Heart left ventricle (tissue), 16 donors: ENCODE measurements at regions of chr11 and their contacts with region 1.

Region 1: DNA sequence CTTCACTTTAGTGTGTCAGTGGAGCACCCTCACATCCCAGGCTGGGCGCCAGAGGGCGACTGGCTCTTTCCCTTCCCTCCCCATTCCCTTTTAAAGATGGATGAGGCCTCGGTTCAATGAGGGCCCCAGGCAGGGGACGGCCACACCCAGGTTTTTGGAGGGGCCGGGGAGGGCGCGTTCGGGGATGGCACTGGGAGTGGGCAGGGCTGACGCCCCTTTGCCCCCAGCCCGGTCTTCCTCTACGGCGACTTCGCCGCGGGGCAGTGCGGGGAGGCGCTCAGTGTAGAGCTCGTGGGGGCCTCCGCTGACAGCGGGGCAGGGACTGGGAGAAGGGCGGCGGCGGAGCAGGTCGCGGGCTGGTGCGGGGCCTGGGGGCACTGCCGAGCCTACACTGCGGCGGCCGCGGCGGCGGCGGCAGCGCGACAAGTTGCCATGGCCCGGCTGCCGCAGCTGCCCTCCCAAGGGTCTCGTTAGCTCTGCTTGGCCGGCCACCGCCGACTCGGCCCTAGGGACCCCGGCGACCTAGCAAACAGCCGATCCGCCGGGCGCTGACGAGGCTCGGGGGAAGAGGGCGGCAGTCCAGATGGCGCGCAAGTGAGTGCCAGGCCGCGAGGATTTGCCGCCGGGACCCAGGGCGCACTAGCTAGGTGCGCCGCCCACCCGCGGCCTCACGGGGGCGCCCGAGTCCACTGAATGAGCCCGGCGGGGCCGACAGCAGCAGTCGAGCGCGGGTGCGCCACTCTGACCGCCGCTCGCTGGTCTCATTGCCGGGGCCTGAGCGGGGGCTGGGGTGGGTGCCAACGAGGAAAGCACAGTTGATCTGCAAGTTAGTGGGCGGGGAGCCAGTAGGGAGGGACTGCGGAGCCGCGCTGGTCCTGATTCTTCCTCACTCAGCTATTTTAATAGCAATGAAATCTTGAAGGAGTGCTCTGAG is 92.7 kb downstream of the RRM1 start:
- DNase-seq: peak; percentile 89 to 96 (median 95)
- ATAC-seq: peak; percentile 53 to 90 (median 82)
- H3K4me3 ChIP-seq: peak overlapping the region; percentile 48 to 75 (median 64)
- H3K27ac ChIP-seq: peak overlapping the region in 6 of 12 donors; percentile 7 to 78 (median 68)
- H3K4me1 ChIP-seq: peaks cover 0 to 35% (median 7%) of the 10 kb centered on the region in 12 donors
- H3K27me3 ChIP-seq: no peaks in the 10 kb centered on the region
- CTCF ChIP-seq: peak; percentile 91 to 98 (median 95)
- POLR2A ChIP-seq: no peak

Region 2: DNA sequence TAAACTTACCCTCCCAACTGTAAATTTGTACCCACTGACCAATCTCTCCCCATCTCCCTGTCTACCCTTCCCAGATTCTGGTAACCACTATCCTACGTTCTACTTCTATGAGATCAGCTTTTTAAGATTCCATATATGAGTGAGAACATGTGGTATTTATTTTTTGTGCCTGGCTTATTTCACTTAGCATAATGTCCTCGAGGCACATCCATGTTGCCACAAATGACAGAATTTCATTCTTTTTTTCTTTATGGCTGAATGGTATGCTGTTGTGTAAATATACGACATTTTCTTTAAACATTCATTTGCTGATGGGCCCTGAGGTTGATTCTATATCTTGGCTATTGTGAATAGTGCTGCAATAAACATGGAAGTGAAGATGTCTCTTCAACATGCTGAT is 167.4 kb before region 1 on chr11:
- intact Hi-C with region 1: no loop called
- DNase-seq: no peak
- ATAC-seq: no peak
- H3K4me3 ChIP-seq: no peak overlapping the region
- H3K27ac ChIP-seq: no peak overlapping the region
- H3K4me1 ChIP-seq: peaks cover 1 to 17% (median 7%) of the 10 kb centered on the region in 12 donors
- H3K27me3 ChIP-seq: no peaks in the 10 kb centered on the region
- CTCF ChIP-seq: no peak
- POLR2A ChIP-seq: no peak

Region 3: DNA sequence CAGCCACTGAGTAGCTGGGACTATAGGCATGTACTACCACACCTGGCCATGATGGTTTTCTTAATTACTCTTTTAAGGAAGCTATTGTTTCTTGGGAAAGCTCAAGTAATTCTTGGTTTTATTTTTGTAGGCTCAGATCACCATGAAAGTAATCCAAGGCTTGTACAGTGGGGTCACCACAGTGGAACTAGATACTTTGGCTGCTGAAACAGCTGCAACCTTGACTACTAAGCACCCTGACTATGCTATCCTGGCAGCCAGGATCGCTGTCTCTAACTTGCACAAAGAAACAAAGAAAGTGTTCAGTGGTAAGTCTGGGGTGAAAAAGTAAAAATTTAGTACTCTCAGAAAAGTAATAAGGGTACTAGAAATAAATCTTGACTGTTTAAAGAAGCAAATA is 81.4 kb before region 1 on chr11:
- intact Hi-C with region 1: no loop called
- DNase-seq: no peak
- ATAC-seq: no peak
- H3K4me3 ChIP-seq: no peak overlapping the region
- H3K27ac ChIP-seq: no peak overlapping the region
- H3K4me1 ChIP-seq: no peaks in the 10 kb centered on the region
- H3K27me3 ChIP-seq: no peaks in the 10 kb centered on the region
- CTCF ChIP-seq: no peak
- POLR2A ChIP-seq: no peak

Region 4: GRCh38 chr11:4496557-4497275 is 309.4 kb after region 1 on chr11:
- intact Hi-C with region 1: loop called (anchors 1 to 2 kb)
- DNase-seq: no peak
- ATAC-seq: no peak
- H3K4me3 ChIP-seq: no peak overlapping the region
- H3K27ac ChIP-seq: no peak overlapping the region
- H3K4me1 ChIP-seq: peaks cover 0 to 8% (median 0%) of the 10 kb centered on the region in 12 donors
- H3K27me3 ChIP-seq: peaks cover 0 to 18% (median 0%) of the 10 kb centered on the region in 9 donors
- CTCF ChIP-seq: no peak
- POLR2A ChIP-seq: no peak

Region 5: GRCh38 chr11:4607781-4608666 is 420.7 kb after region 1 on chr11 and contains the start of gene TRIM68:
- intact Hi-C with region 1: loop called in 1 of 10 experiments (anchors 5 kb)
- DNase-seq: peak; percentile 97 to 99 (median 98)
- ATAC-seq: peak; percentile 99 to 100 (median 100)
- H3K4me3 ChIP-seq: peak within 1 kb of the TSS; percentile 64 to 91 (median 76)
- H3K27ac ChIP-seq: peak within 1 kb of the TSS; percentile 82 to 97 (median 93)
- H3K4me1 ChIP-seq: peaks cover 0 to 35% (median 17%) of the 10 kb centered on the region in 12 donors
- H3K27me3 ChIP-seq: no peaks in the 10 kb centered on the region
- CTCF ChIP-seq: peak in 1 of 12 donors; percentile 13
- POLR2A ChIP-seq: peak in 1 of 2 donors; percentile 89
- total RNA-seq, gene TRIM68: 7.5 to 14.1 (median 10.2) TPM

Region 6: DNA sequence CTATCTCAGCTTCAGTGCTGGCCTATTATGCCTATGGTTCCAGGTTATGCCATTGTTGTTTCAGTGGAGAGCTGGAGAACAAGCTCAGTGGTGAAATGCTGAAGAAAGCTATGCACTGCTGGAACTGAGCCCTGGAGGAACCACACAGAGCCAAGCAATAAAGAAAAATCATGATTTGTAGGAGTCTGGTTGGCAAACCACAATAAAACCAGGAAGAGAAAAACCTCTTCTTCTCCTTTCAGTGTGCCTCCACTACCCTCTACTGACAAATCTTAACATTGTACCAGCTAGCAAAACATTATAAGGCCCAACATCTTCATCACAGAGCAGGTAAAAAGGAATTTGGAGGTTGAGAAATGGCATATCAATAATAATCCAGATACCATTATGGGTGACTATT is 639.1 kb after region 1 on chr11:
- intact Hi-C with region 1: loop called in 3 of 10 experiments (anchors 5 to 10 kb)
- DNase-seq: no peak
- ATAC-seq: peak in 2 of 4 donors; percentile 59 to 64
- H3K4me3 ChIP-seq: no peak overlapping the region
- H3K27ac ChIP-seq: no peak overlapping the region
- H3K4me1 ChIP-seq: no peaks in the 10 kb centered on the region
- H3K27me3 ChIP-seq: no peaks in the 10 kb centered on the region
- CTCF ChIP-seq: peak in 11 of 12 donors; percentile 35 to 67 (median 57)
- POLR2A ChIP-seq: no peak